CD8-positive, alpha-beta T cell (primary cell): ENCODE measurements at regions of chr16 and their contacts with region 1.

Region 1: GRCh38 chr16:52191531-52192134 is 355.3 kb downstream of the TOX3 start:
- DNase-seq: peak; percentile 0 to 66 (median 43)
- ATAC-seq: no peak
- H3K4me3 ChIP-seq: no peak overlapping the region
- H3K4me3 Mint-ChIP-seq: no peak overlapping the region
- H3K27ac ChIP-seq: no peak overlapping the region
- H3K27ac Mint-ChIP-seq: no peak overlapping the region
- H3K4me1 ChIP-seq: no peaks in the 10 kb centered on the region
- H3K4me1 Mint-ChIP-seq: no peaks in the 10 kb centered on the region
- H3K27me3 ChIP-seq: no peaks in the 10 kb centered on the region
- H3K27me3 Mint-ChIP-seq: no peaks in the 10 kb centered on the region
- CTCF ChIP-seq: peak; percentile 95

Region 2: DNA sequence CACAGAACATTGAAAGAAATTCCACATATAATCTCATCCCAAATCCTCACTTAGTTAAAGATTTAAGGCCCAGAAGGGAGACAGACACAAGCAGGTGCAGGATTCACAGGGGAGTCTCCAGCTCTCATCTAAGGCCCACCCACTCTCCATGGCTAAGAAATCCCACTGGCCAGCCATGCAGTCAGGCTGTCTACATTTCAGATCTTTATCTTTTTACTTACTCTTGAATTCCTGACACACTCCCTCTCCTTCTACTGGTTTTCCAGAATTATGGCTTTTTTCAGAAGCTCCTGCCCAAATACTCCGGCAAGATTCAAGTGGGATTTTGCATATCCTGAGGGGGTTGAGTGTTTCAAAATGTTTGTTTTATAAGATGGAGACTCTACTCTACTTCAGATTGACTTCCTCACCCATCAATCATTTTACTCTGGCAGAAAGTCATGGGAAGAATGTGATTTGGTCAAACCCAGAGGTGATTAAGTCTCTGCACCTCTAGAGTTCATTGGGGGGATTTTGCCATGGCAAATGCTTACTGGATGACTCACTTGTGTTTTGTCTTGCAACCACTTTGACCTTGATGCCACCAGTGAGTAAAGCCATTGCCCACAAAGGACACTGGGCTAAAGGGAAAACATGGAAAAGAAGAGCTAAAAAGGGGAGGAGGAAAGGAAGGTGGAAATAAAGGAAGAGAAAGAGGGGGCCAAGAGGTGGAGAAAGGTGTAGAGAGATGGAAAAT is 351.7 kb before region 1 on chr16:
- CTCF ChIA-PET with region 1: no interaction called
- POLR2A ChIA-PET with region 1: no interaction called
- intact Hi-C with region 1: no loop called
- DNase-seq: no peak
- ATAC-seq: no peak
- H3K4me3 ChIP-seq: no peak overlapping the region
- H3K4me3 Mint-ChIP-seq: no peak overlapping the region
- H3K27ac ChIP-seq: no peak overlapping the region
- H3K27ac Mint-ChIP-seq: no peak overlapping the region
- H3K4me1 ChIP-seq: no peaks in the 10 kb centered on the region
- H3K4me1 Mint-ChIP-seq: no peaks in the 10 kb centered on the region
- H3K27me3 ChIP-seq: no peaks in the 10 kb centered on the region
- H3K27me3 Mint-ChIP-seq: no peaks in the 10 kb centered on the region
- CTCF ChIP-seq: no peak

Region 3: DNA sequence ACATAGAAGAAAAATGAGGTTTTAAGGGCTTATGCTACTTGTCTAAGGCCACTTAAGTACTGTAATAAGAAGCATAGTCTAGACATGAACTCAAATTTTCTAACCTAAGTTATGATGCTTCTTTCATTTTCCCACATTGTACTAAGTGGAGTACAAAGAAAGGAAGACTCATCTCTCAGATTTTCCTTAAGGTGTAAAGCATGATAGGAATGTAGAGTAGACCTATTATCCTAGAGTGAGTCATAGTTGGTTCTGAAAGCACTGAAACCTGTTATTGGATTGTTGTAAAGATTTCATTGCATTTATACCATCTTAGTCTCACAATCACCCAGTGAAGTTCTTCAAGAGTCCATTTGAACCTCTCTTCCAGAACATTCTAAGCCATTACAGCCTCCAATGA is 11.5 kb after region 1 on chr16:
- CTCF ChIA-PET with region 1: interaction called, 31 read pairs
- POLR2A ChIA-PET with region 1: no interaction called
- intact Hi-C with region 1: no loop called
- DNase-seq: no peak
- ATAC-seq: no peak
- H3K4me3 ChIP-seq: no peak overlapping the region
- H3K4me3 Mint-ChIP-seq: no peak overlapping the region
- H3K27ac ChIP-seq: no peak overlapping the region
- H3K27ac Mint-ChIP-seq: no peak overlapping the region
- H3K4me1 ChIP-seq: no peaks in the 10 kb centered on the region
- H3K4me1 Mint-ChIP-seq: no peaks in the 10 kb centered on the region
- H3K27me3 ChIP-seq: no peaks in the 10 kb centered on the region
- H3K27me3 Mint-ChIP-seq: peaks cover 4% of the 10 kb centered on the region
- CTCF ChIP-seq: no peak

Region 4: GRCh38 chr16:52677501-52677900 is 485.9 kb after region 1 on chr16:
- CTCF ChIA-PET with region 1: no interaction called
- POLR2A ChIA-PET with region 1: no interaction called
- intact Hi-C with region 1: no loop called
- DNase-seq: no peak
- ATAC-seq: no peak
- H3K4me3 ChIP-seq: no peak overlapping the region
- H3K4me3 Mint-ChIP-seq: no peak overlapping the region
- H3K27ac ChIP-seq: no peak overlapping the region
- H3K27ac Mint-ChIP-seq: no peak overlapping the region
- H3K4me1 ChIP-seq: no peaks in the 10 kb centered on the region
- H3K4me1 Mint-ChIP-seq: no peaks in the 10 kb centered on the region
- H3K27me3 ChIP-seq: no peaks in the 10 kb centered on the region
- H3K27me3 Mint-ChIP-seq: peaks cover 2% of the 10 kb centered on the region
- CTCF ChIP-seq: no peak

Region 5: DNA sequence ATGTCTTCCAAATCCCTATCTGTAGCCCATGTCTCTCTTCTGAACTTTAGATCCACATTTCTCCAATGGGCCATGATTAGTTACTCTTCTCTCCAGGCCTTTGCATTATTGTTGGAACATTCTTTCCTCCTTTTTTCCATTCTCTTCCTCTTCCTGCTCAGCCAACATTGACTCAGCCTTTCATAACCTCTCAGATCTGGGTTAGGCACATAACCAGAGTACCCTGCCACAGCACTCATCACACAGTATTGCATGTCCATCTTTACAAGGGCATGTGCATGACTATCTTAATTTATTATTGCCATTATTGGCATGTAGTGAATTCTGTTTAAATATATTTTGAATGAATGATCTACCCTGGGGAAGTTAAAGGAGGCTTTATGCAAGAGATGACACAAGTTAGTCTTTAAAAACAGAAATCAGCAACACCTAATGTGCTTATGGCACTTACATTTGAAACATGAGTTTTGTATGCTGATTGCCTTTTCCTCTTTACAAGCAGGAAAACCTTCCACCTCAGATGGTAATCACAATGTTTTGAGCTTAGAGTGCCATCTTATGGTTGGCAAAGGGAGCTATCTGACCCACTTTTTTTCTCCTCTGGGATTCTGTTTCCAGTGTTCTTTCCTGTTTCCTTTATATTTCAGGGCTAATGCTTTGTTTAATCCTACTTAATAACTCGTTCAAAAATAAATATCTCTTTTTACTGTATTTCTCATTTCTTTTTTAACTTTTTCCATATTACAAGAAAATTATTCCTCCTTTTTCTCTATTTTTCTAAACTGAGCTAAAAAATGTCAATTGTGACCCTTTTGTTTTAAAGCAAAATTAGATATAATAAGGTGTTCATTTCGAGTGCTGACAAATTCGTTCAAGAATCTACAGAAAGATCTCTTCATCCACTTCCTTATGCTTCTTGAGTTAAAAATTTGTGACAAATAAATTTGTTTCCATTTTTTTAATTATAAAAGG is 1091.6 kb after region 1 on chr16:
- CTCF ChIA-PET with region 1: interaction called, 5 read pairs
- POLR2A ChIA-PET with region 1: no interaction called
- intact Hi-C with region 1: loop called in 1 of 2 experiments (anchors 2 kb)
- DNase-seq: peak in 2 of 9 experiments; percentile 38 to 53
- ATAC-seq: no peak
- H3K4me3 ChIP-seq: no peak overlapping the region
- H3K4me3 Mint-ChIP-seq: no peak overlapping the region
- H3K27ac ChIP-seq: no peak overlapping the region
- H3K27ac Mint-ChIP-seq: no peak overlapping the region
- H3K4me1 ChIP-seq: no peaks in the 10 kb centered on the region
- H3K4me1 Mint-ChIP-seq: no peaks in the 10 kb centered on the region
- H3K27me3 ChIP-seq: no peaks in the 10 kb centered on the region
- H3K27me3 Mint-ChIP-seq: no peaks in the 10 kb centered on the region
- CTCF ChIP-seq: peak; percentile 47